H1 (cell line): ENCODE measurements at regions of chr7 and their contacts with region 1.

Region 1: GRCh38 chr7:26574476-26574875 is 282.8 kb downstream of the SNX10 start:
- DNase-seq: no peak
- H3K4me3 ChIP-seq: no peak overlapping the region
- H3K27ac ChIP-seq: no peak overlapping the region
- H3K4me1 ChIP-seq: no peaks in the 10 kb centered on the region
- H3K27me3 ChIP-seq: no peaks in the 10 kb centered on the region
- CTCF ChIP-seq: no peak
- EP300 ChIP-seq: no peak
- POLR2A ChIP-seq: no peak
- RAD21 ChIP-seq: no peak

Region 2: DNA sequence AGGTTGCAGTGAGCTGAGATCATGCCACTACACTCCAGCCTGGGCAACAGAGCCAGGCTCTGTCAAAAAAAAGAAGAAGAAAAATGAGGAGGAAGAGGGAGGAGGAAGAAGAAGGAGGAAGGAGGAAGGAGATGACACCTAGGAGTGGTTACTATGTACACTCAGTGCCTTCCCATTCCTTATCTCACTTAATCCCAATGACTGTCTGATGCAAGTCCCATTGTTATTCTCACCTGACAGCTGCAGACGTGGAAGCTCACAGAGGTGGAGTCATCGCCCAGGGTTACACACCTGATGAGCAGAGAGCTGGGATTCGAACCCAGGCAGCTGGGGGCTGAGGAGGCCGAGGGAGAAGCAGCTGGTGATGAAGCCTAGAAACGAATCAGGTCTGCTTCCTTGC is 24.0 kb before region 1 on chr7:
- CTCF ChIA-PET with region 1: no interaction called
- POLR2A ChIA-PET with region 1: no interaction called
- DNase-seq: no peak
- H3K4me3 ChIP-seq: no peak overlapping the region
- H3K27ac ChIP-seq: no peak overlapping the region
- H3K4me1 ChIP-seq: peaks cover 0 to 3% (median 0%) of the 10 kb centered on the region in 4 experiments; a peak in 4 of 7 replicates
- H3K27me3 ChIP-seq: no peaks in the 10 kb centered on the region
- CTCF ChIP-seq: no peak
- EP300 ChIP-seq: no peak
- POLR2A ChIP-seq: no peak
- RAD21 ChIP-seq: no peak

Region 3: DNA sequence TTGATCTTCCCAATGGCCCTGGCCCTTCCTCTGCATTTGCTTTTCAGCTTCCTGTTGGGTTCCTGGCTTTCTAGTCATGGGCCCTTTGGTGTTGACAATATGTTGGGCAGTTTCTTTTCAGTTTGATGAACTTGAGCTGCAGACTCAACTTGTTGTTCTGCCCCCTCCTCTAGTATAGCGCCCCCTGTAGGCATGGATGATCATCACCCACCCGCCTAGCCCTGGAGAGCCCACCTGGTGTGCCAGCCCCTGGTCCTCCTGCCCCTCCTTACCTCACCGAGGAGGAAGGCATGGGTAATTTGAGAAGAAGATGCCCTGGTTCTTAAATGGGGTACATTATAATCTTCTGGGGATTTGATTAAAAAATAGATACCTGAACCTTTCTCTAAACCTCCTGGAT is 11.6 kb before region 1 on chr7:
- CTCF ChIA-PET with region 1: interaction called, 11 read pairs
- POLR2A ChIA-PET with region 1: no interaction called
- DNase-seq: no peak
- H3K4me3 ChIP-seq: no peak overlapping the region
- H3K27ac ChIP-seq: no peak overlapping the region
- H3K4me1 ChIP-seq: no peaks in the 10 kb centered on the region
- H3K27me3 ChIP-seq: no peaks in the 10 kb centered on the region
- CTCF ChIP-seq: peak in 2 of 3 experiments; percentile 23 to 47; a peak in 2 of 4 replicates
- EP300 ChIP-seq: no peak
- POLR2A ChIP-seq: no peak
- RAD21 ChIP-seq: no peak